Dorsolateral prefrontal cortex (tissue), 120 donors: ENCODE measurements at regions of chr5 and their contacts with region 1.

Region 1: GRCh38 chr5:150340614-150341255 is 16.8 kb upstream of the TCOF1 start:
- DNase-seq: peak in 1 of 10 donors; percentile 34
- H3K4me3 ChIP-seq: no peak overlapping the region
- H3K27ac ChIP-seq: peak overlapping the region in 9 of 59 donors; percentile 17 to 94 (median 39)
- H3K27me3 ChIP-seq: no peaks in the 10 kb centered on the region
- CTCF ChIP-seq: no peak

Region 2: DNA sequence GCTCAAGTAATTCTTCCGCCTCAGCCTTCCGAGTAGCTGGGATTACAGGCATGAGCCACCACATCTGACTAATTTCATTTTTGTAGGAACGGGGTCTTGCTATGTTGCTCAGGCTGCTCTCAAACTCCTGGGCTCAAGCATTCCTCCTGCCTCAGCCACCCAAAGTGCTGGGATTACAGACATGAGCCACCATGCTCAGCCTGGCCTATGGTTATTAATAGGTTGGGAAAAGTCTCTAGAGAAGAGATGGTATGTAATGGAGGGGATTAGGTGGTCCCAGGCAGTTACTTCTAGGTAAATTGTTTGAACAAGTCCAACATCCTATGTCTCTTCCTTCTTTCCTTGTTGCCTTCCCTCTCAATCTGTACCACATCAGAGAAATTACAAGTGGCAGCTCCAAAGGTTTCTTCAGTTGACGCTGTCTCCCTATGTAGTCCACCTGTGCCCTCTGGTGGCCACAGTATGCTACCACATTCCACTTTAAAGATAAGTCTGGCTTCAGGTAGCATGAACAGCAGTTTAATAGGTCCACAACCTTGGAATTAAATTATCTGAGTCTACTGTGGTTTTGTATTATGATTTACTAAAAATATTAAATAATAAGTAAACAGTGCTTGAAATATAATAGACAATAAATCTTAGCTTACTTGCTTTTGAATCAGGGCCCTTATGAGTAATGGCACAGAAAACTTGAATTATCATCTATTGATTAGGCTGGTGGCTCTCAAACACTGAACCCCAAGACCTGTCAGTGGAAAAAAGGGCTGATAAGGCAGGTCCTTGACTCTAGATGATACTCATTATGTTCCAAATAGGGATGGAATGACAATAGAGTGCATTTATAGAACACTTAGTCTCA is 350.0 kb before region 1 on chr5:
- intact Hi-C with region 1: loop called in 1 of 2 experiments (anchors 10 kb)
- DNase-seq: peak; percentile 34 to 84 (median 61)
- H3K4me3 ChIP-seq: no peak overlapping the region
- H3K27ac ChIP-seq: no peak overlapping the region
- H3K27me3 ChIP-seq: no peaks in the 10 kb centered on the region
- CTCF ChIP-seq: peak; percentile 78 to 98 (median 91)

Region 3: GRCh38 chr5:150302301-150303069 is 38.2 kb before region 1 on chr5 and contains the start of gene ARSI:
- intact Hi-C with region 1: loop called in 1 of 2 experiments (anchors 5 kb)
- DNase-seq: no peak
- H3K4me3 ChIP-seq: peak within 1 kb of the TSS in 44 of 59 donors; percentile 7 to 51 (median 32)
- H3K27ac ChIP-seq: peak within 1 kb of the TSS in 39 of 59 donors; percentile 1 to 78 (median 53)
- H3K27me3 ChIP-seq: peaks cover 0 to 7% (median 0%) of the 10 kb centered on the region in 45 donors
- CTCF ChIP-seq: peak in 2 of 56 donors; percentile 7 to 13
- total RNA-seq, gene ARSI: 0.35 to 9.0 (median 2.2) TPM